CD4-positive, alpha-beta T cell (primary cell): ENCODE measurements at regions of chr1 and their contacts with region 1.

Region 1: GRCh38 chr1:167721617-167722151 is at the start of gene MPZL1:
- DNase-seq: peak; percentile 81 to 94 (median 88)
- ATAC-seq: peak; percentile 94
- H3K4me3 ChIP-seq: peak within 1 kb of the TSS; percentile 71
- H3K4me3 Mint-ChIP-seq: peak within 1 kb of the TSS; percentile 90
- H3K27ac ChIP-seq: no peak within 1 kb of the TSS
- H3K27ac Mint-ChIP-seq: peak within 1 kb of the TSS; percentile 73
- H3K4me1 ChIP-seq: peaks cover 32% of the 10 kb centered on the region
- H3K4me1 Mint-ChIP-seq: peaks cover 72% of the 10 kb centered on the region
- H3K27me3 ChIP-seq: no peaks in the 10 kb centered on the region
- H3K27me3 Mint-ChIP-seq: no peaks in the 10 kb centered on the region
- CTCF ChIP-seq: no peak
- total RNA-seq, gene MPZL1: 1.2 to 1.5 TPM

Region 2: DNA sequence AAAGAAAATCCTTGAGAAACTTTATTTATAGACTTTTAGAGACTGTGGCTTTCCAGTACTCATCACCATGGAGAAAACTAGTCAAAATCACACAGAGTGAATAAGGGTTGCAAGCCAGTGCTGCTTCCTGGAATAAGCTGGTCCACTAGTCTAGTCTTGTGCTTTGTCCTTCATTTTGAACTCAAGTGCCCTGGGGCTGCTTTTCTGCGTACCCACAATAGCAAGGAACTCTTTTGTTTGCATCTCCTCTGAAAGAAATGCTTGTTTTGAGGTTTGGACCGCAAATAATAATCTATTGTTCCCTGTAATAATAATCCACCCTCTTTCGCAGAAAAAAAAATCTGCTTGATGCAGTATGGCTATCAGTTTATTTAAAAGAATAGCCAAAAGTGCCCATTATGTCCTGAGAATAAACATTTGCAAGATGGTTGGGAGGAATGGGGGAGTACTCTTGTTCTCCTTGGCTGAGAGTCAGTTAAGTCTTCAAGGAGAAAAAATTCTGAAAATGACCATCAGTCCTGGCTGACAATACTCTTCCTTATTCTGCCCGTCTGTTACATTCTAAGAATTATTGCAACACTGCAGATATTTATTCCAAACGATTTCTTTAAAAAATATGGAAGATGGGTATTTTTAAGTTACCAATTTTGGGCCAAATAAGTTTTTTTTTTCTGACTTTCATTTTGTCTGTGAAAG is 42.0 kb after region 1 on chr1:
- CTCF ChIA-PET with region 1: no interaction called
- POLR2A ChIA-PET with region 1: interaction called, 4 read pairs
- intact Hi-C with region 1: loop called in 1 of 2 experiments (anchors 5 kb)
- DNase-seq: no peak
- ATAC-seq: no peak
- H3K4me3 ChIP-seq: no peak overlapping the region
- H3K4me3 Mint-ChIP-seq: no peak overlapping the region
- H3K27ac ChIP-seq: no peak overlapping the region
- H3K27ac Mint-ChIP-seq: no peak overlapping the region
- H3K4me1 ChIP-seq: peaks cover 11% of the 10 kb centered on the region
- H3K4me1 Mint-ChIP-seq: peaks cover 23% of the 10 kb centered on the region
- H3K27me3 ChIP-seq: no peaks in the 10 kb centered on the region
- H3K27me3 Mint-ChIP-seq: no peaks in the 10 kb centered on the region
- CTCF ChIP-seq: no peak